ENCODE measurements at regions of chr17 and their contacts with region 1.

Region 1: DNA sequence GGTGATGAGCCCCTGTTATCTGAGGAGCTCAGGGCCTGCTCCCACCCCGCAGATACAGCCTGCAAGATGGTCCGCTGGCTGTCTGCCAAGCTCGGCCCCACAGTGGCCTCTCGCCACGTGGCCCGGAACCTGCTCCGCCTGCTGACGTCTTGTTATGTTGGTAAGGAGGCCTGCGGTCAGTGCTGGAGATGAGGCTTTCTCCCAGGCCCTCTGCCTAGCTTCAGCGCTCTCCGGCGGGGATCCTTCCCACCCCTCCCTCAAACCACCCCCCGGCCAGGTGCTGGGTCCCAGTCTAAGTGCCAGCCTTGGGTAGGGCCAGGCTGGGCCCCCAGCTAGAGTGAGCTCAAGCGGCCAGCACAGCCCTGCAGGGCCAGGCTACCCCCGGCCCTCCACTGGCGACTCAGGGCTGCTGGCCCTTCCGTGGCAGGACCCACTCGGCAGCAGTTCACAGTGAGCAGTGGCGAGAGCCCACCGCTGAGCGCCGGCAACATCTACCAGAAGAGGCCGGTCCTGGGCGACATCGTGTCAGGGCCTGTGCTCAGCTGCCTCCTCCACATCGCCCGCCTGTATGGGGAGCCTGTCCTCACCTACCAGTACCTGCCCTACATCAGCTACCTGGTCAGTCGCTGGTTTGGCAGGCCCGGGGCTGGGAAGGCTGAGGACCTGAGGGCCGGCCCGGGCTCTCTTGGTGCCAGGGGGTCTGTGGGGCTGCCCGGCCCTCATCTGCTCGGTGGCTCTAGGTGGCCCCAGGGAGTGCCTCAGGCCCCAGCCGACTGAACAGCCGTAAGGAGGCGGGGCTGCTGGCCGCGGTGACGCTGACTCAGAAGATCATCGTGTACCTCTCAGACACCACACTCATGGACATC is 6.1 kb downstream of the WDR81 start:
- DNase-seq: peak; percentile 78 to 96 (median 84)
- ATAC-seq: peak; percentile 92
- H3K4me3 ChIP-seq: peak overlapping the region; percentile 16; the same call in 1 of the 2 replicates
- H3K27ac ChIP-seq: peak overlapping the region; percentile 97
- H3K4me1 ChIP-seq: peaks cover 23 to 77% of the 10 kb centered on the region in 2 experiments
- H3K27me3 ChIP-seq: no peaks in the 10 kb centered on the region
- CTCF ChIP-seq: 0 out of 6 replicates have a peak, but pooled peaks of 2 of the 3 experiments have one; percentile 9 to 13
- EP300 ChIP-seq: peak; percentile 54
- POLR2A ChIP-seq: peak; percentile 60
- RAD21 ChIP-seq: peak in 1 of 2 experiments; percentile 14; a peak in 1 of 4 replicates

Region 2: GRCh38 chr17:1769822-1770477 is 39.4 kb after region 1 on chr17:
- CTCF ChIA-PET with region 1: no interaction called
- POLR2A ChIA-PET with region 1: no interaction called
- in situ Hi-C with region 1: loop called (anchors 5 kb)
- intact Hi-C with region 1: no loop called
- DNase-seq: no peak
- ATAC-seq: no peak
- H3K4me3 ChIP-seq: no peak overlapping the region
- H3K27ac ChIP-seq: no peak overlapping the region
- H3K4me1 ChIP-seq: peaks cover 4 to 15% of the 10 kb centered on the region in 2 experiments; a peak in 4 of 5 replicates
- H3K27me3 ChIP-seq: no peaks in the 10 kb centered on the region
- CTCF ChIP-seq: no peak
- EP300 ChIP-seq: no peak
- POLR2A ChIP-seq: no peak
- RAD21 ChIP-seq: no peak